CD4-positive, alpha-beta T cell (primary cell): ENCODE measurements at regions of chr14 and their contacts with region 1.

Region 1: GRCh38 chr14:22955702-22956569 is 954 bp downstream of the HAUS4 start:
- DNase-seq: no peak
- ATAC-seq: no peak
- H3K4me3 ChIP-seq: peak overlapping the region; percentile 89
- H3K4me3 Mint-ChIP-seq: peak overlapping the region; percentile 92
- H3K27ac ChIP-seq: peak overlapping the region; percentile 63 to 83
- H3K27ac Mint-ChIP-seq: peak overlapping the region; percentile 83
- H3K4me1 ChIP-seq: peaks cover 21% of the 10 kb centered on the region
- H3K4me1 Mint-ChIP-seq: peaks cover 18% of the 10 kb centered on the region
- H3K27me3 ChIP-seq: no peaks in the 10 kb centered on the region
- H3K27me3 Mint-ChIP-seq: no peaks in the 10 kb centered on the region
- CTCF ChIP-seq: no peak

Region 2: GRCh38 chr14:22918804-22919600 is 36.9 kb before region 1 on chr14 and contains the start of gene RBM23:
- CTCF ChIA-PET with region 1: interaction called, 3 read pairs
- POLR2A ChIA-PET with region 1: interaction called, 13 read pairs
- intact Hi-C with region 1: no loop called
- DNase-seq: peak; percentile 99 to 100 (median 100)
- ATAC-seq: peak; percentile 84
- H3K4me3 ChIP-seq: peak within 1 kb of the TSS; percentile 74
- H3K4me3 Mint-ChIP-seq: peak within 1 kb of the TSS; percentile 88
- H3K27ac ChIP-seq: peak within 1 kb of the TSS; percentile 99 to 100
- H3K27ac Mint-ChIP-seq: peak within 1 kb of the TSS; percentile 100
- H3K4me1 ChIP-seq: peaks cover 38% of the 10 kb centered on the region
- H3K4me1 Mint-ChIP-seq: peaks cover 50% of the 10 kb centered on the region
- H3K27me3 ChIP-seq: no peaks in the 10 kb centered on the region
- H3K27me3 Mint-ChIP-seq: peaks cover 4% of the 10 kb centered on the region
- CTCF ChIP-seq: no peak
- total RNA-seq, gene RBM23: 87.9 to 111 TPM

Region 3: DNA sequence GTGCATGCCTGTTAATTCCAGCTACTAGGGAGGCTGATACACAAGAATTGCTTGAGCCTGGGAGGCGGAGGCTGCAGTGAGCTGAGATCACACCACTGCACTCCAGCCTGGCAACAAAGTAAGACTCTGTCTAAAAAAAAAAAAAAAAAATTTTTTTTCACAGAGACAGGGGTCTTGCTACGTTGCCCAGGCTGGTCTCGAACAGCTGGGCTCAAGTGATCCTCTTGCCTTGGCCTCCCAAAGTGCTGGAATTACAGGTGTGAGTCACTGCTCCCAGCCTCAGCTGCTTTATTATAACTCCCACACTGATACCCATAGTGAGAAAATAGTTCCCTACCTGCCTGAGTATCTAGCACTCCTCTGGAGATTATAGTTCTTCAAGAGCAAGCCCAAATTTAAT is 10.3 kb before region 1 on chr14:
- CTCF ChIA-PET with region 1: no interaction called
- POLR2A ChIA-PET with region 1: interaction called, 11 read pairs
- intact Hi-C with region 1: no loop called
- DNase-seq: no peak
- ATAC-seq: no peak
- H3K4me3 ChIP-seq: no peak overlapping the region
- H3K4me3 Mint-ChIP-seq: no peak overlapping the region
- H3K27ac ChIP-seq: no peak overlapping the region
- H3K27ac Mint-ChIP-seq: no peak overlapping the region
- H3K4me1 ChIP-seq: no peaks in the 10 kb centered on the region
- H3K4me1 Mint-ChIP-seq: no peaks in the 10 kb centered on the region
- H3K27me3 ChIP-seq: no peaks in the 10 kb centered on the region
- H3K27me3 Mint-ChIP-seq: no peaks in the 10 kb centered on the region
- CTCF ChIP-seq: no peak

Region 4: GRCh38 chr14:23052182-23052623 is 96.3 kb after region 1 on chr14:
- CTCF ChIA-PET with region 1: no interaction called
- POLR2A ChIA-PET with region 1: no interaction called
- intact Hi-C with region 1: no loop called
- DNase-seq: no peak
- ATAC-seq: no peak
- H3K4me3 ChIP-seq: no peak overlapping the region
- H3K4me3 Mint-ChIP-seq: no peak overlapping the region
- H3K27ac ChIP-seq: no peak overlapping the region
- H3K27ac Mint-ChIP-seq: no peak overlapping the region
- H3K4me1 ChIP-seq: peaks cover 16% of the 10 kb centered on the region
- H3K4me1 Mint-ChIP-seq: peaks cover 13% of the 10 kb centered on the region
- H3K27me3 ChIP-seq: no peaks in the 10 kb centered on the region
- H3K27me3 Mint-ChIP-seq: no peaks in the 10 kb centered on the region
- CTCF ChIP-seq: no peak

Region 5: GRCh38 chr14:23555882-23556699 is 600.2 kb after region 1 on chr14 and contains the start of gene THTPA:
- CTCF ChIA-PET with region 1: no interaction called
- POLR2A ChIA-PET with region 1: no interaction called
- intact Hi-C with region 1: no loop called
- DNase-seq: peak; percentile 86 to 96 (median 91)
- ATAC-seq: peak; percentile 91
- H3K4me3 ChIP-seq: peak within 1 kb of the TSS; percentile 94
- H3K4me3 Mint-ChIP-seq: peak within 1 kb of the TSS; percentile 99
- H3K27ac ChIP-seq: peak within 1 kb of the TSS; percentile 87 to 89
- H3K27ac Mint-ChIP-seq: peak within 1 kb of the TSS; percentile 79
- H3K4me1 ChIP-seq: peaks cover 40% of the 10 kb centered on the region
- H3K4me1 Mint-ChIP-seq: peaks cover 42% of the 10 kb centered on the region
- H3K27me3 ChIP-seq: peaks cover 0 to 1% of the 10 kb centered on the region in 2 experiments
- H3K27me3 Mint-ChIP-seq: peaks cover 9% of the 10 kb centered on the region
- CTCF ChIP-seq: no peak
- total RNA-seq, gene THTPA: 13.0 to 13.4 TPM